Mammary epithelial cell (primary cell): ENCODE measurements at regions of chr6 and their contacts with region 1.

Region 1: DNA sequence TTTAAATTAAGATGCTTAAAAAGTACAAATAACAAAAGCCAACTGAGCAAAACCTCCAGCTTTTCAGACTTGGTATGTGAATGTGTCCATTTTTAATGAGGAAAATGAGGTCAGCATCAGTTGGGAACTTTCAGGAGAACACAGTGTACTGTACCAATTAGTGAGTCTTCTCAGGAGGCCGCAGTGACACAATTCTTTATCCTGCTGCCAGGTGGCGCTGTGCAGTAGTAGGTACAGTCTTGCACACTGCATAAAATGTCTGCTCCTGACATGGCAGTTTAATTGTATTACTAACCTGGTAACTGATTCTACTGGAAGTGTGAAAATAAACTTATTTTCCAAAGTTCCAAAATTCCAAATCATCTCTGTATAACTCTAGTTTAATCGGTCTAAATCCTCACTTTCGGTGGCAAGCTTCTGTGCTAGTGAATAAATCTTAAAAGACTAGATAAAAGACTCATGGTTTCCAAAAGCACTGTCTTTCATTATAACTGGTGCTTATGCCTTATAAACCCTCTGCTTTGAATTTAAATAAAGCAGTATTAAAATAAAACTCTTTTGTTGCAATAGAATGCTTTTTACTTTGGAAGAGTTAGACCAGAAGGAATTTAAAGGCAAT is 214.8 kb upstream of the MMS22L start:
- DNase-seq: peak; percentile 45
- H3K4me3 ChIP-seq: no peak overlapping the region
- H3K27ac ChIP-seq: no peak overlapping the region
- H3K4me1 ChIP-seq: no peaks in the 10 kb centered on the region
- H3K27me3 ChIP-seq: peaks cover 3% of the 10 kb centered on the region
- CTCF ChIP-seq: peak; percentile 91 to 97

Region 2: DNA sequence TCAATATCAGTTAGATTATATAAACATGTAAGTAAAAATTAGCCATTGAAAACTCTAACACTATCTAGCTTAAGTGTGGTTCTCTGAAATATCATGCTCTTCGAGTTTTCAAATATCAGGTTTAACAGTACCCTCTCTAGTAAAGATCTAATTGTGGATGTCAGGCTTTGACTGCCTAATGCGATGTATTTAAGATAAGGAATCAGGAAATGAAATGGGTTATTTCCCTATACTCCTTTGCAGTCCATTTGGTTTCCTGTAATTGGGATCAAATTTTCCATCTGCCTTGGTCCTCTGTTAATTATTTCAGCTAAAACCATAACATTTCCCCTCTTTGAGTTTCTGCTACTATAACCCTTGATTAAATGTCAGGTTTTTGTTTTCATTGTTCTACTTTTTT is 146.5 kb after region 1 on chr6:
- CTCF ChIA-PET with region 1: no interaction called
- dilution Hi-C with region 1: no loop called
- in situ Hi-C with region 1: no loop called
- intact Hi-C with region 1: no loop called
- DNase-seq: no peak
- H3K4me3 ChIP-seq: no peak overlapping the region
- H3K27ac ChIP-seq: no peak overlapping the region
- H3K4me1 ChIP-seq: no peaks in the 10 kb centered on the region
- H3K27me3 ChIP-seq: no peaks in the 10 kb centered on the region
- CTCF ChIP-seq: no peak

Region 3: GRCh38 chr6:97925504-97925903 is 427.7 kb after region 1 on chr6:
- CTCF ChIA-PET with region 1: no interaction called
- dilution Hi-C with region 1: no loop called
- in situ Hi-C with region 1: no loop called
- intact Hi-C with region 1: loop called (anchors 1 kb)
- DNase-seq: no peak
- H3K4me3 ChIP-seq: no peak overlapping the region
- H3K27ac ChIP-seq: no peak overlapping the region
- H3K4me1 ChIP-seq: no peaks in the 10 kb centered on the region
- H3K27me3 ChIP-seq: peaks cover 5% of the 10 kb centered on the region
- CTCF ChIP-seq: peak; percentile 3 to 37

Region 4: GRCh38 chr6:98039869-98040607 is 542.2 kb after region 1 on chr6:
- CTCF ChIA-PET with region 1: interaction called, 3 read pairs
- dilution Hi-C with region 1: no loop called
- in situ Hi-C with region 1: no loop called
- intact Hi-C with region 1: loop called (anchors 2 kb)
- DNase-seq: peak; percentile 17
- H3K4me3 ChIP-seq: no peak overlapping the region
- H3K27ac ChIP-seq: no peak overlapping the region
- H3K4me1 ChIP-seq: no peaks in the 10 kb centered on the region
- H3K27me3 ChIP-seq: peaks cover 6% of the 10 kb centered on the region
- CTCF ChIP-seq: peak; percentile 21 to 49